GM10248 (cell line): ENCODE measurements at regions of chr1 and their contacts with region 1.

Region 1: GRCh38 chr1:112803906-112804762 is 89.0 kb upstream of the PPM1J start:
- DNase-seq: peak; percentile 83
- CTCF ChIP-seq: peak; percentile 97

Region 2: GRCh38 chr1:112706908-112707663 is 97.0 kb before region 1 on chr1 and contains the start of gene RHOC:
- CTCF ChIA-PET with region 1: interaction called, 11 read pairs
- POLR2A ChIA-PET with region 1: no interaction called
- DNase-seq: peak; percentile 90
- CTCF ChIP-seq: peak; percentile 96

Region 3: GRCh38 chr1:112727716-112728115 is 76.4 kb before region 1 on chr1:
- CTCF ChIA-PET with region 1: interaction called, 410 read pairs
- POLR2A ChIA-PET with region 1: no interaction called
- DNase-seq: no peak
- CTCF ChIP-seq: no peak

Region 4: DNA sequence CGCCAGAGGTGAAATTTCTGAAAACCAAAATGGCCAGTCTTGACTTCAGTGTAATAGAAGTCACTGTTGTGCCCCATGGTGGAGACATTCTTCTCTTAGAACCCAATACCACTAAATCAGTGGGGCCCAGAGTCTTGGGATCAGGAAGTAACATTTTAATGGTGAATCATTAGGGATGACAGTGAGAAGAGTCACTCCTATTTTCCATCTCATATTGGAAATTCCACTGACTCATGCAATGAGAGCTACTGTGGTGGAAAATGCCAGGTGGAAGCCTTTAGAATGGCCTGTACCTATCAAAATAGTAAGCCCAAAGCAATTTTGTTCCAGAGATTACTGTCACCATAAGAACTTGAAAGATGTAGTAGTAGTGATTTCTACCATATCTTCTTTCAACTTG is 68.4 kb before region 1 on chr1:
- CTCF ChIA-PET with region 1: interaction called, 14 read pairs
- POLR2A ChIA-PET with region 1: no interaction called
- DNase-seq: no peak
- CTCF ChIP-seq: no peak

Region 5: GRCh38 chr1:112778137-112778536 is 26.0 kb before region 1 on chr1:
- CTCF ChIA-PET with region 1: interaction called, 16 read pairs
- POLR2A ChIA-PET with region 1: no interaction called
- DNase-seq: no peak
- CTCF ChIP-seq: no peak

Region 6: GRCh38 chr1:112818990-112819689 is 15.0 kb after region 1 on chr1:
- CTCF ChIA-PET with region 1: interaction called, 12 read pairs
- POLR2A ChIA-PET with region 1: no interaction called
- DNase-seq: no peak
- CTCF ChIP-seq: no peak